A673 (cell line): ENCODE measurements at regions of chr11 and their contacts with region 1.

Region 1: GRCh38 chr11:73271936-73272719 is at the start of gene P2RY6:
- DNase-seq: peak; percentile 29
- H3K4me3 ChIP-seq: no peak within 1 kb of the TSS
- H3K27ac ChIP-seq: no peak within 1 kb of the TSS
- H3K4me1 ChIP-seq: no peaks in the 10 kb centered on the region
- H3K27me3 ChIP-seq: no peaks in the 10 kb centered on the region
- CTCF ChIP-seq: no peak
- total RNA-seq, gene P2RY6: 0.43 TPM in 1 of 2 replicates, not detected in the other

Region 2: GRCh38 chr11:72609045-72609444 is 663.1 kb before region 1 on chr11:
- CTCF ChIA-PET with region 1: no interaction called
- POLR2A ChIA-PET with region 1: interaction called, 10 read pairs
- intact Hi-C with region 1: no loop called
- DNase-seq: peak; percentile 47
- H3K4me3 ChIP-seq: no peak overlapping the region
- H3K27ac ChIP-seq: no peak overlapping the region
- H3K4me1 ChIP-seq: peaks cover 8% of the 10 kb centered on the region
- H3K27me3 ChIP-seq: no peaks in the 10 kb centered on the region
- CTCF ChIP-seq: peak; percentile 77

Region 3: GRCh38 chr11:73295231-73295995 is 23.3 kb after region 1 on chr11:
- CTCF ChIA-PET with region 1: no interaction called
- POLR2A ChIA-PET with region 1: interaction called, 11 read pairs
- intact Hi-C with region 1: no loop called
- DNase-seq: peak; percentile 89
- H3K4me3 ChIP-seq: no peak overlapping the region
- H3K27ac ChIP-seq: no peak overlapping the region
- H3K4me1 ChIP-seq: peaks cover 4% of the 10 kb centered on the region
- H3K27me3 ChIP-seq: no peaks in the 10 kb centered on the region
- CTCF ChIP-seq: peak; percentile 99

Region 4: GRCh38 chr11:73414977-73415651 is 143.0 kb after region 1 on chr11:
- CTCF ChIA-PET with region 1: no interaction called
- POLR2A ChIA-PET with region 1: no interaction called
- intact Hi-C with region 1: no loop called
- DNase-seq: no peak
- H3K4me3 ChIP-seq: no peak overlapping the region
- H3K27ac ChIP-seq: no peak overlapping the region
- H3K4me1 ChIP-seq: peaks cover 19% of the 10 kb centered on the region
- H3K27me3 ChIP-seq: no peaks in the 10 kb centered on the region
- CTCF ChIP-seq: no peak